Activated CD4-positive, alpha-beta memory T cell treated with anti-CD3 and anti-CD28 coated beads for 36 hours (primary cell): ENCODE measurements at regions of chr1 and their contacts with region 1.

Region 1: GRCh38 chr1:154546264-154547063 is 12.0 kb downstream of the UBE2Q1 start:
- DNase-seq: peak; percentile 74
- H3K4me3 Mint-ChIP-seq: no peak overlapping the region
- H3K27ac Mint-ChIP-seq: peak overlapping the region; percentile 19
- H3K4me1 Mint-ChIP-seq: peaks cover 20% of the 10 kb centered on the region
- H3K27me3 Mint-ChIP-seq: no peaks in the 10 kb centered on the region

Region 2: GRCh38 chr1:154419620-154420571 is 126.6 kb before region 1 on chr1:
- CTCF ChIA-PET with region 1: no interaction called
- POLR2A ChIA-PET with region 1: no interaction called
- intact Hi-C with region 1: no loop called
- DNase-seq: peak; percentile 88
- H3K4me3 Mint-ChIP-seq: peak overlapping the region; percentile 54
- H3K27ac Mint-ChIP-seq: peak overlapping the region; percentile 89
- H3K4me1 Mint-ChIP-seq: peaks cover 87% of the 10 kb centered on the region
- H3K27me3 Mint-ChIP-seq: no peaks in the 10 kb centered on the region

Region 3: GRCh38 chr1:154453574-154454352 is 92.7 kb before region 1 on chr1:
- CTCF ChIA-PET with region 1: no interaction called
- POLR2A ChIA-PET with region 1: no interaction called
- intact Hi-C with region 1: no loop called
- DNase-seq: peak; percentile 40
- H3K4me3 Mint-ChIP-seq: no peak overlapping the region
- H3K27ac Mint-ChIP-seq: no peak overlapping the region
- H3K4me1 Mint-ChIP-seq: peaks cover 19% of the 10 kb centered on the region
- H3K27me3 Mint-ChIP-seq: peaks cover 4% of the 10 kb centered on the region

Region 4: GRCh38 chr1:154493276-154493675 is 53.2 kb before region 1 on chr1:
- CTCF ChIA-PET with region 1: interaction called, 16 read pairs
- POLR2A ChIA-PET with region 1: no interaction called
- intact Hi-C with region 1: no loop called
- DNase-seq: peak; percentile 24
- H3K4me3 Mint-ChIP-seq: no peak overlapping the region
- H3K27ac Mint-ChIP-seq: no peak overlapping the region
- H3K4me1 Mint-ChIP-seq: peaks cover 44% of the 10 kb centered on the region
- H3K27me3 Mint-ChIP-seq: no peaks in the 10 kb centered on the region